ENCODE measurements at regions of chr6 and their contacts with region 1.

Region 1: GRCh38 chr6:33711140-33712129 is at the start of gene UQCC2:
- DNase-seq: peak; percentile 97
- H3K4me3 ChIP-seq: peak within 1 kb of the TSS; percentile 86 to 87
- H3K27ac ChIP-seq: peak within 1 kb of the TSS; percentile 79 to 97
- H3K4me1 ChIP-seq: peaks cover 8 to 17% of the 10 kb centered on the region in 2 experiments; a peak in 3 of 4 replicates
- H3K27me3 ChIP-seq: no peaks in the 10 kb centered on the region
- CTCF ChIP-seq: peak; percentile 68
- EP300 ChIP-seq: no peak
- RAD21 ChIP-seq: peak; percentile 82
- polyA plus RNA-seq, gene UQCC2: 49.8 and 59.0 TPM in 2 replicates

Region 2: DNA sequence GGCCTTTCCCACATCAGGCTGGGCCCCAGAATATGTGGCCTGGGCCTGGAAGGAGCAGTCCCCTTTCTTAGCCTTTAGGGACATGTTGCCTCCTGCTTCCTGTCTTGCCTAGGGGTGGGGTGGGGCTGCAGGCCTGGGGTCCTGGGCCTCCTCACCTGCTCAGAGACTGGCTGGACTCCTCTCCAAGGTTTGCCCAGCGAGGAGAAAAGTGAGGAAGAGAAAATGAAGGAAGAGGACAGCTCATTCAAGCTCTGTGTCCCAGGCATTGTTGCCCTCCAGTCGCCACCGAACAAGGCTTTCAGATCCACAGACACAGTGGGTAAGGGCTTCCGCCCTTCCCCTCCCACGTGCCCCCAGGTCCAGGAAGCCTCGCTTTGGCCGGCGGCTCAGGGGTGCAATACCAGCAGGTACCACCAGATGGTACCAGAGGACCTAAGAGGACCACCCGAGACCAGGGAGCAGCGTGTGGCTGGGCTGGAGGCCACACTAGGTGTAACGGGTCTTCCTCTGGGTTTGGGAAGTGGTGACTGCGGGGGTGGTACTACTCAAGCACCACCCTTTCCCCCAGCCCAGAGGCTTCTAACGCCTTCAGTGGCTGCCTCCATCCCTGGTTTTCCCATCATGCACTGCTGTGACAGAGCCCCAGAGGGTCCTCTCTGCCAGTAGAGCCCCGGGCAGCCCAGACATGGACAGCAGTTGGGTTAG is 125.9 kb before region 1 on chr6:
- CTCF ChIA-PET with region 1: interaction called, 188 read pairs
- POLR2A ChIA-PET with region 1: interaction called, 6 read pairs
- DNase-seq: peak; percentile 89
- H3K4me3 ChIP-seq: peak overlapping the region in 1 of 2 experiments; percentile 35; a peak in 2 of 4 replicates
- H3K27ac ChIP-seq: no peak overlapping the region
- H3K4me1 ChIP-seq: peaks cover 7 to 19% of the 10 kb centered on the region in 2 experiments; a peak in 3 of 4 replicates
- H3K27me3 ChIP-seq: no peaks in the 10 kb centered on the region
- CTCF ChIP-seq: peak; percentile 95
- EP300 ChIP-seq: no peak
- RAD21 ChIP-seq: peak; percentile 91

Region 3: GRCh38 chr6:33700391-33701050 is 10.9 kb before region 1 on chr6:
- CTCF ChIA-PET with region 1: interaction called, 55 read pairs
- POLR2A ChIA-PET with region 1: interaction called, 4 read pairs
- DNase-seq: peak; percentile 62
- H3K4me3 ChIP-seq: no peak overlapping the region; a peak in 1 of 4 replicates
- H3K27ac ChIP-seq: no peak overlapping the region; a peak in 1 of 4 replicates
- H3K4me1 ChIP-seq: peaks cover 20 to 34% of the 10 kb centered on the region in 2 experiments; a peak in 3 of 4 replicates
- H3K27me3 ChIP-seq: no peaks in the 10 kb centered on the region
- CTCF ChIP-seq: peak; percentile 76
- EP300 ChIP-seq: no peak
- RAD21 ChIP-seq: peak; percentile 78

Region 4: DNA sequence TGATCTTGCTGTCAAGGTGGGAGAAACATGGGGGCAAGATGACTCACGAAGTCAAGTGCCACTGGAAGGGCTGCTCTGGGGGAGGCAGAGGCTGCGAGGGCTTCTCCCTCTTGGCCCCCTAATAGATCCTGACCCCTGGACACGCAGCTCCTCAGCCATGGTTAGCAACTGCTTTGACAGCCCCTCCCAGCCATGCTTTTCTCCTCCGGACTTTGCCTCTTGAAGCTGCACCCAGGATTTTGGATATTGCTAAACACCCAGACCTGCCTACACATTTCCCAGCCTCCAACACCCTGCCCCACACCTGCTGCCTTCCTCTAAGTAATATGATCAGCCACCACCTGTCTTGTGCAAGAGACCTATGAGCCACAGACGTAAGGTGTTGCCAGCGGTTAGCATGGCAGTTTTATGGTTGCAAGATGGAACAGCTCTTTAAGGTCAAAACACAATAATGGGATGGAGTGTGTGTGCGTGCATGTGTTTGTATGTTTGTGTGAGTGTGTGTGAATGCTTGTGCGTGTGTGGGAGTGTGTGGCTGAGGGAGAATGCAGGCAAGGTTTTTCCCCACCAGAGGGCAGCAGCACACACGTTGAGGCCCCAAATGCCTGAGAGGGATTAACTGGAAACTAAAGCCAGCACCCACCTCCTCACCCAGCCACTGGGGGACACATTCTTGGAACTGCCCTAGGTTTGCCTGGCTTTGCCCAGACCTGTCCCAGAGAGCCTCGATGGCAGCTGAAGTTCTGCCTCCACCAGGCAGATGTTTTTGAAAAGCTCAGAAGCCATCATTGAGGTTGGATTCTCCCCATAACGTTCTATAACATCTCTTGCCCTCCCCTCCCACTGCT is 32.8 kb after region 1 on chr6:
- CTCF ChIA-PET with region 1: interaction called, 25 read pairs
- POLR2A ChIA-PET with region 1: interaction called, 7 read pairs
- DNase-seq: peak; percentile 90
- H3K4me3 ChIP-seq: no peak overlapping the region; a peak in 1 of 4 replicates
- H3K27ac ChIP-seq: no peak overlapping the region
- H3K4me1 ChIP-seq: peaks cover 15 to 37% of the 10 kb centered on the region in 2 experiments; a peak in 3 of 4 replicates
- H3K27me3 ChIP-seq: no peaks in the 10 kb centered on the region
- CTCF ChIP-seq: peak; percentile 93
- EP300 ChIP-seq: no peak
- RAD21 ChIP-seq: peak; percentile 83

Region 5: DNA sequence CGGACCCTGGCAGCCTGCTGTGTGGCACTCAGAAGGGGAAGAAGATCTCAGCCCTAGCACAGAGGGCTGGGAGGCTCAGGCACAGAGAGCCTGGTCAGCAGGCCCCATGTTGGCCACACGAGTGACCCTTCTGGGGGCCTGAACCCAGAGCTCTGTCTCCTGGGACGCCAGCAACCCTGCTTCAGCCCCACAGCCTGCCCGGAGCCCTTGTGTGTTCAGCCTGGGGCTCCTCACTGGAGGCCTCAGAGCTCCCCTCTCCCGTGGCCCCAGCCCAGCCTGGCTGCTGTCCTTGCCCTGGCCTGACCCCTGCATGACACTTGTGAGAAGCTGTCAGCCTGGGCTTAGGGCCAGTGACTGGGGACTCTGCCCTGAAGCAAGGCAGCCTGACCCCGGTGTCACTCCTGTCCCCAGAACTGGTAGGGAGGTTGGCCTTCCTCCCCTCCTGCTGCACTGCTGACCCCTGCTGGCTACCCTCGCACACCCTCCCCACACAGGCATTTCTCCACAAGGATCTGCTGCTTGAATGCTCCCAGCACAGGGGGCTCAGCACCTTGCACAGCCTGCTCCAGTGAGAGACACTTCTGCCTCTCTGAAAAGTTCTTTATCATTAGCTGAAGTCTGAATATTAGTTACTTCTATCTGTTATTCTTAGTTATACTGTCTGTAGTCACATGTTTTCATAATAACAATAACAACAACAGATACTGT is 50.6 kb after region 1 on chr6:
- CTCF ChIA-PET with region 1: interaction called, 34 read pairs
- POLR2A ChIA-PET with region 1: no interaction called
- DNase-seq: peak; percentile 71
- H3K4me3 ChIP-seq: no peak overlapping the region
- H3K27ac ChIP-seq: peak overlapping the region in 1 of 2 experiments; percentile 56; a peak in 2 of 4 replicates
- H3K4me1 ChIP-seq: peaks cover 0 to 19% of the 10 kb centered on the region in 2 experiments; a peak in 1 of 4 replicates
- H3K27me3 ChIP-seq: no peaks in the 10 kb centered on the region
- CTCF ChIP-seq: peak; percentile 59
- EP300 ChIP-seq: no peak
- RAD21 ChIP-seq: peak; percentile 72

Region 6: DNA sequence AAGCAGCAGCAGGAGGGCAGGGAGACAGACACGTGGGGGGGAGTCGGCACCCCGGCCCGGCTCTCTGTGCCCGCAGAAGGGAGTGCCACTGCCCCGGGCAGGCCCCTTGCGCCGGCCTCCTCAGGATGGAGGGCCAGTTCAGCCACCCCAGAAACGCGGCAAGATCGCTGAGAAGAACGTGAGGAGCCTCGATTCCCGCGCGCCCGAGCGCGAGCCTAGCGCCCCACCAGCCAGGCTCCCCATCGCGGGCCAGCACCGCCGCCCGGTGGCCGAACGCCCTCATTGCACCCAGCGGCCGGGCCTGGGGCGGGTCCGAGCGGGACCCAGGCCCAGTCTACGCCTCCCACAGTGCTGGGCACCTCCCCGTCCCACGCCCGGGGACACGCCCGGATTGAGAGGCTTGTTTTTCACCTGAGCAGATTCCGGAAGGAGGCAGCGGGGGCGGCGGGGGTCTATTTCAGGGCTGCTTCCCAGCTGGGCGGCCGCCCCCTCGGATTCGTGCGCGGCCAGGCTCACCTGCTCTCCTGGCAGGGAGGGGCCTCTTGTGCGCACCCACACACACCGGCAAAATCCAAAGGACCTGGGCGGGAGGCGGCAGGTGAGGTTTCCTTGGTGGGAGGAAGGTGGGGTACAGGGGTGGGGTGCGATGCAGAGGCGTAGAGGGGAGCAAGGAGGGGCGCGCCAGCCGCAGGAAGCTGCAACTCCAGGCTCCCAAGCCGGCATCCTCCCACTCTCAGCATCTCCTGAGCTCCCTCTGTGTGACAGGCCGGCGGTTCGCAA is 443.4 kb after region 1 on chr6:
- CTCF ChIA-PET with region 1: interaction called, 17 read pairs
- POLR2A ChIA-PET with region 1: no interaction called
- DNase-seq: peak; percentile 98
- H3K4me3 ChIP-seq: peak overlapping the region; percentile 17 to 59; a peak in 2 of 4 replicates
- H3K27ac ChIP-seq: no peak overlapping the region
- H3K4me1 ChIP-seq: peaks cover 0 to 2% of the 10 kb centered on the region in 2 experiments; a peak in 1 of 4 replicates
- H3K27me3 ChIP-seq: peaks cover 25% of the 10 kb centered on the region
- CTCF ChIP-seq: peak; percentile 89
- EP300 ChIP-seq: no peak
- RAD21 ChIP-seq: peak; percentile 95